HEK293 (cell line): ENCODE measurements at regions of chrX and their contacts with region 1.

Region 1: DNA sequence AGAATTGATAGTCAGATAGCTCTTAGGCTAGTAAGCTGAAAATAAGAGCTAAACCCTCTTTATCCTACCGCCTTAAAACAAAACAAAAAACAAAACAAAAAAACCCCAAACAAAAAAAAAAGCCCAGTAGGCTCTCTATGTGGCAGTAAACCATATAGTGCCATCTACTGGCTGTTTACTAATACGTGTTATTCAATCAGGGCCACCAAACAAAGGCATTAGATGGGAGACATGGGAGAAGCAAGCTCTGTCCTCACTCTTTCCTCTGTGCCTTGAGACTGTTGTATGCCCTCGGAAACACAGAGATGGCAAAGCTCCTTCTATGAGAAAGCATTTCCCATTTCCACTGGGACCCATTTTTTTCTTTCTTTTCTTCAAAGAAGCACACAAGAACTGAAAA is 148.8 kb upstream of the MID1 start:
- H3K4me3 ChIP-seq: no peak overlapping the region; the same call in 1 of the 2 replicates
- H3K27ac ChIP-seq: no peak overlapping the region
- H3K4me1 ChIP-seq: no peaks in the 10 kb centered on the region
- CTCF ChIP-seq: no peak

Region 2: GRCh38 chrX:10254741-10255140 is 514.5 kb before region 1 on chrX:
- CTCF ChIA-PET with region 1: no interaction called
- POLR2A ChIA-PET with region 1: no interaction called
- H3K4me3 ChIP-seq: no peak overlapping the region
- H3K27ac ChIP-seq: no peak overlapping the region
- H3K4me1 ChIP-seq: no peaks in the 10 kb centered on the region
- CTCF ChIP-seq: no peak

Region 3: DNA sequence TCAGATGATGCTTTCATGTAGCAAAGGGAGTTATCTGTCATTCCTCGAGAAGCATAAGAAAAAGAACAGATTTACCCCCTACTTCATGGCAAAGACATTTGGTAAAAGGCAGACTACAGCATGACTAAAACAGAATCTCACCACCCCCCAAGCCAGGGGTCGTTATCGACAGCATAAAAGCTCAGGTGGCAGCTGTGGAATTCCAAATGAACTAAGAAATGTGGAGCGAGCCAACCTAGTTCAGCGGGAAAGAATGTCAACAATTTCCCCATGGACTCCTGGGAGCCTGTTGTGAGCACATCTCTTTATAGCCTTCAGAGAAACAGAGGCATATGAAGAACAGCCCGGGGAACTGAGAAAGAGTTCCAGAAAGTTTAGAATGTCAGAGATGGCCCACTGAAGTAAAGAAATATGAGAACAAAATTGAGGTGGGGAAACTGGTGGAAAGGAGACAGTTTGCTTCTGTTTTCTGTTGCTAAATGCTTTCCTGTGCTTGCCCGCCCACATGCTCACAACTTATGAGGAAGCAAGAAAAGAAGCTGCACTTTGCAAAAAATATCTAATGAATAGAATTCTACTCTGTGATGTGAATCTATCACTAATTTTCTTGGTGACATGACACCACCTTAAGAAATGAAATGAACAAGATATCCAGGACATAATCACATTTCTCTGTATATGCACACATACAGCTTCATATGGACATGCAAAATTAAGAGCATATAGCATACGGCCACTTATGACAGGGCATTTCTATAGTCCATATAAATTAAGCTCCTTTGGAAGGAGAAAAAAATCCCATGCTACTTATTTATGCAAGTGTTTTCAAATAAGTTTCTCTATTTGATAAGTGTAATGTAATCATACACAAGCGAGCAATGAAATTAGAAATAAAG is 13.5 kb before region 1 on chrX:
- CTCF ChIA-PET with region 1: interaction called, 11 read pairs
- POLR2A ChIA-PET with region 1: interaction called, 3 read pairs
- H3K4me3 ChIP-seq: no peak overlapping the region
- H3K27ac ChIP-seq: no peak overlapping the region
- H3K4me1 ChIP-seq: peaks cover 4% of the 10 kb centered on the region; the same call in 1 of the 2 replicates
- CTCF ChIP-seq: no peak

Region 4: DNA sequence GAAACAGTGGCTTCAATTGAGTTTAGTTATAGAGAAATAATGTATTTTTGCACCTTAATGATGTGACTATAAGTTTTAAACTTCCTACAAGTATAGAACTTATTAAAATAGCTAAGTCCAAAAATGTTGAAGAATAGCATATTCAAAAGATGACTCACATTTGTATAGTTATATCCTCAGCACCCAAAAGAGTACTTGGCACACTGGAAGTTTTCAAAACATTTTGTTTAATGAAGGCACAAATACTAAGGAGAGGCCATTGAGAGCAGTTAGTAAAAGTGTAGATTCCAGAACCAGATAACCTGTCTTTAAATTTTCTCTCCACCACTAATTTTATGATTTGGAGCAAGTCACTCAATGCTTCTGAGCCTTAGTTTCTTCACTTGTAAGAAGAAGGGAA is 78.1 kb after region 1 on chrX:
- CTCF ChIA-PET with region 1: no interaction called
- POLR2A ChIA-PET with region 1: no interaction called
- H3K4me3 ChIP-seq: no peak overlapping the region
- H3K27ac ChIP-seq: no peak overlapping the region
- H3K4me1 ChIP-seq: no peaks in the 10 kb centered on the region
- CTCF ChIP-seq: no peak